HepG2 (cell line): ENCODE measurements at regions of chr19 and their contacts with region 1.

Region 1: DNA sequence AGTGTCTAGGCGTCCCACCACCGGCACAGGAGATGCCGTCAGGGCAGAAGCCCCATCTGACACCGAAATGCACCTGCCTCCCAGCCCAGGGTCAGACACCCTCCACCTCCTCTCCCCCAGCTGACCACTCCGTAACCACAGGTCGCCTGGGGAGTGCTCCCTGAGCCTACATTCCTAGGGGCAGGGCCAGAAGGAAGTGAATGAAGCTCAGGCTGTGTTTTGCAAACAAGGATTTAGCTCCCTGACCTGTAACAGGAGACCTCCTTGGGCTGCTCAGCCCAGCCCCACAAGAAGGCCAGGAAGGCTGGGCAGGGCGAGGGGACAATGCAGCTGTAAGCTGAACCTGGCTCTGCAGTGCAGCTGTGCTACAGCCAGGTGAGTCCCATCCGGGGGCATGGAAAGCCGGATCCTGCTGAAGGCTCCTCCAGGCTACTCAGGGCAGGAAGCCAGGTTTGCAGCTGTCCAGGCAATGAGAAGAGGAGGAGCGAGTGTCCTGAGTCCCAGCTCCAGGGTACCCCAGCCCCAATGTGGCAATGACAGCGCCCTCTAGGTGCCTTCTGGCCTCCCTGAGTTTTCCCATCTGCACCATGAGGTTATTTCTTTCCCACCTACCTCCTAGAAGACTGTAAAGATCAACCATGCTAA is 42.1 kb downstream of the RHPN2 start:
- DNase-seq: no peak
- ATAC-seq: no peak
- H3K4me3 ChIP-seq: no peak overlapping the region
- H3K27ac ChIP-seq: no peak overlapping the region
- H3K4me1 ChIP-seq: peaks cover 48% of the 10 kb centered on the region
- H3K27me3 ChIP-seq: no peaks in the 10 kb centered on the region
- CTCF ChIP-seq: peak; percentile 28; the same call in 1 of the 2 replicates
- EP300 ChIP-seq: no peak
- POLR2A ChIP-seq: no peak
- RAD21 ChIP-seq: no peak

Region 2: DNA sequence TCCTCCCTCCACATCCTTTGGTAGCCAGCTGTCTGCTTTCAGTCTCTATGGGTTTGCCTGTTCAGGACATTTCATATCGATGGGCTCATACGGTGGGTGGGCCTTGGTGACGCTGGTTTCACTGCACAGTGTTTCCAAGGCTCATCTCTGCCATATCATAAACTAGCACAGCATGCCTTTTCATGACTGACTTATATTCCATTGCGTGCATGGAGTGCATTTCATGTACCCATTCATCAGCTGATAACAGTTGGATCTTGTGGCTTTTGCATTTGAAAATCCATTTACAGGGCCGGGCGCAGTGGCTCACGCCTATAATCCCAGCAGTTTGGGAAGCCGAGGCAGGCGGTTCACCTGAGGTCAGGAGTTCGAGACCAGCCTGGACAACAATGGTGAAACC is 233.2 kb before region 1 on chr19:
- CTCF ChIA-PET with region 1: no interaction called
- POLR2A ChIA-PET with region 1: no interaction called
- in situ Hi-C with region 1: no loop called
- intact Hi-C with region 1: no loop called
- DNase-seq: no peak
- ATAC-seq: no peak
- H3K4me3 ChIP-seq: no peak overlapping the region
- H3K27ac ChIP-seq: no peak overlapping the region
- H3K4me1 ChIP-seq: peaks cover 8% of the 10 kb centered on the region; the same call in 1 of the 2 replicates
- H3K27me3 ChIP-seq: peaks cover 0 to 2% of the 10 kb centered on the region in 2 experiments; a peak in 3 of 5 replicates
- CTCF ChIP-seq: no peak
- EP300 ChIP-seq: no peak
- POLR2A ChIP-seq: no peak
- RAD21 ChIP-seq: no peak

Region 3: DNA sequence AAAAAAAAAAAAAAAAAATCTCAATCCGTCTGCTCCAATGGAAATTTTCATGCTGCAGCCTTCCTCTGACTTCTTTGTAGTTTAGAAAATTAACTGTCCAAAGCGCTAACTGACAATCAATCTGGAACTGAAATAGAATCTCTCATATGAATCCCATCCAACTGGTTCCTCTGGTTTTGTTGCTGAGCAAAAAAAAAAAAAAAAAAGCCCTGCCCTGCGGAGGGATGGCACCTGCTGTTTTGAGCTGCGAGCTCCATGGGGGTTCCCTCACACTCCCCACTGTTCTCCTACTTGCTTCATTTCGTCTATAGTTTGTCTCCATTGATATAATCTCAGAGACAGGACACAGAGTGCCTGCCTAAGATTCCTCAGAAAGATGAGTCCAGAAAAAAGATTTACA is 17.2 kb before region 1 on chr19:
- CTCF ChIA-PET with region 1: no interaction called
- POLR2A ChIA-PET with region 1: no interaction called
- in situ Hi-C with region 1: no loop called
- intact Hi-C with region 1: no loop called
- DNase-seq: no peak
- ATAC-seq: no peak
- H3K4me3 ChIP-seq: no peak overlapping the region
- H3K27ac ChIP-seq: no peak overlapping the region
- H3K4me1 ChIP-seq: no peaks in the 10 kb centered on the region
- H3K27me3 ChIP-seq: no peaks in the 10 kb centered on the region
- CTCF ChIP-seq: no peak
- EP300 ChIP-seq: no peak
- POLR2A ChIP-seq: no peak
- RAD21 ChIP-seq: no peak

Region 4: GRCh38 chr19:34772697-34773554 is 1750.3 kb after region 1 on chr19 and contains the start of gene ZNF599:
- CTCF ChIA-PET with region 1: no interaction called
- POLR2A ChIA-PET with region 1: no interaction called
- in situ Hi-C with region 1: no loop called
- intact Hi-C with region 1: loop called (anchors 10 kb)
- DNase-seq: peak; percentile 83
- ATAC-seq: peak; percentile 99
- H3K4me3 ChIP-seq: peak within 1 kb of the TSS; percentile 71 to 95 (median 79)
- H3K27ac ChIP-seq: peak within 1 kb of the TSS; percentile 70
- H3K4me1 ChIP-seq: peaks cover 12% of the 10 kb centered on the region
- H3K27me3 ChIP-seq: no peaks in the 10 kb centered on the region; a peak in 1 of 5 replicates
- CTCF ChIP-seq: no peak; the same call in 1 of the 2 replicates
- EP300 ChIP-seq: no peak
- POLR2A ChIP-seq: peak; percentile 67 to 86
- RAD21 ChIP-seq: peak; percentile 31; the same call in 1 of the 2 replicates
- total RNA-seq, gene ZNF599: 5.8 and 9.4 TPM in 2 replicates